Left ventricle myocardium inferior (tissue), 1 donor: ENCODE measurements at regions of chr12 and their contacts with region 1.

Region 1: GRCh38 chr12:31631784-31632183 is 27.7 kb upstream of the ETFBKMT start:
- DNase-seq: no peak
- H3K4me3 ChIP-seq: no peak overlapping the region
- H3K27ac ChIP-seq: no peak overlapping the region
- H3K4me1 ChIP-seq: peaks cover 17% of the 10 kb centered on the region
- H3K27me3 ChIP-seq: no peaks in the 10 kb centered on the region
- CTCF ChIP-seq: no peak

Region 2: GRCh38 chr12:31406345-31406744 is 225.4 kb before region 1 on chr12:
- intact Hi-C with region 1: loop called (anchors 2 kb)
- DNase-seq: no peak
- H3K4me3 ChIP-seq: no peak overlapping the region
- H3K27ac ChIP-seq: no peak overlapping the region
- H3K4me1 ChIP-seq: no peaks in the 10 kb centered on the region
- H3K27me3 ChIP-seq: no peaks in the 10 kb centered on the region
- CTCF ChIP-seq: no peak